ENCODE measurements at regions of chr20 and their contacts with region 1.

Region 1: GRCh38 chr20:956330-956951 is 40.3 kb upstream of the ANGPT4 start:
- DNase-seq: peak; percentile 80
- ATAC-seq: peak; percentile 84
- H3K4me3 Mint-ChIP-seq: no peak overlapping the region
- H3K27ac Mint-ChIP-seq: no peak overlapping the region
- H3K4me1 Mint-ChIP-seq: no peaks in the 10 kb centered on the region
- H3K27me3 Mint-ChIP-seq: peaks cover 20% of the 10 kb centered on the region

Region 2: GRCh38 chr20:610130-611046 is 346.1 kb before region 1 on chr20 and contains the start of gene TCF15:
- CTCF ChIA-PET with region 1: no interaction called
- POLR2A ChIA-PET with region 1: no interaction called
- DNase-seq: no peak
- ATAC-seq: peak; percentile 50
- H3K4me3 Mint-ChIP-seq: no peak within 1 kb of the TSS
- H3K27ac Mint-ChIP-seq: no peak within 1 kb of the TSS
- H3K4me1 Mint-ChIP-seq: peaks cover 4% of the 10 kb centered on the region
- H3K27me3 Mint-ChIP-seq: peaks cover 50% of the 10 kb centered on the region
- total RNA-seq, gene TCF15: not detected

Region 3: DNA sequence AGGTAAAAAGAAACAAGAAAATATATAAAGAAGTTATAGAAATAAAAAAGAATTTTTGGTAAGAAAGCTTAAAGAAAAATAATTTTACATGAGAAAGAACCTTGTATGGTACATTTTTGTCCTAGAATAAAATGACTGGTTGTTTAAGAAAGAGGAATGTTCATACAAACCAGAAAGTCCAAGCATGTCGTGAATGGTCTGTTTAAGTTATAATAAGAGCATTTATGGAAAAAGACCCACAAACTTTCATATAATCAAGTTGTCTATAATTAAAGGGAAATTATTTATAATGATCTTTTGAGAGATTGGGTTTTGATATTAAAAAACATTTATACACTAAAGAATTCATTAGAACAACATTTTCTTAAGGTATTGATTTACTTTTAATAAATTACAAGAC is 150.7 kb before region 1 on chr20:
- CTCF ChIA-PET with region 1: interaction called, 16 read pairs
- POLR2A ChIA-PET with region 1: no interaction called
- DNase-seq: no peak
- ATAC-seq: no peak
- H3K4me3 Mint-ChIP-seq: no peak overlapping the region
- H3K27ac Mint-ChIP-seq: no peak overlapping the region
- H3K4me1 Mint-ChIP-seq: no peaks in the 10 kb centered on the region
- H3K27me3 Mint-ChIP-seq: peaks cover 12% of the 10 kb centered on the region

Region 4: GRCh38 chr20:833450-834150 is 122.8 kb before region 1 on chr20 and contains the start of gene FAM110A:
- CTCF ChIA-PET with region 1: interaction called, 42 read pairs
- POLR2A ChIA-PET with region 1: no interaction called
- DNase-seq: peak; percentile 97
- ATAC-seq: peak; percentile 92
- H3K4me3 Mint-ChIP-seq: peak within 1 kb of the TSS; percentile 94
- H3K27ac Mint-ChIP-seq: peak within 1 kb of the TSS; percentile 87
- H3K4me1 Mint-ChIP-seq: peaks cover 40% of the 10 kb centered on the region
- H3K27me3 Mint-ChIP-seq: no peaks in the 10 kb centered on the region
- total RNA-seq, gene FAM110A: 35.9 to 36.3 TPM

Region 5: GRCh38 chr20:973785-974194 is 17.3 kb after region 1 on chr20:
- CTCF ChIA-PET with region 1: interaction called, 34 read pairs
- POLR2A ChIA-PET with region 1: no interaction called
- DNase-seq: peak; percentile 56
- ATAC-seq: peak; percentile 65
- H3K4me3 Mint-ChIP-seq: no peak overlapping the region
- H3K27ac Mint-ChIP-seq: no peak overlapping the region
- H3K4me1 Mint-ChIP-seq: peaks cover 2% of the 10 kb centered on the region
- H3K27me3 Mint-ChIP-seq: peaks cover 5% of the 10 kb centered on the region

Region 6: DNA sequence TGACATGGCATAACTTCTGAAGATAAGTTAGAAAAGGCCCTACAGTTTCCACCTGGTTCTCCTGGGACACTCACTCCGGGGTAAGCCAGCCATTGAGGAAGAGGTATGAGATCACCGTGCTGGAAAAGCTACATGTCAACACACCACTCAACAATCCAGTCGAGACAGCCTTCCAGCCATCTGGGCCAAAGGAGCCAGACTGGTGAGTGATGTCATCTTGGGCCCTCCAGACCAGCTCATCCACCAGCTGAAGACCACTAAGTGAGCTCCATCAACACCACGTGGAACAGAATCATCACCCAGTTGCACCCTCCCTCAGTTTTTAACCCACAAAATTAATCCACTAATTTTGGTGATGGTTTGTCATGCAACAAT is 78.0 kb after region 1 on chr20:
- CTCF ChIA-PET with region 1: no interaction called
- POLR2A ChIA-PET with region 1: no interaction called
- DNase-seq: no peak
- ATAC-seq: no peak
- H3K4me3 Mint-ChIP-seq: no peak overlapping the region
- H3K27ac Mint-ChIP-seq: no peak overlapping the region
- H3K4me1 Mint-ChIP-seq: no peaks in the 10 kb centered on the region
- H3K27me3 Mint-ChIP-seq: no peaks in the 10 kb centered on the region

Region 7: DNA sequence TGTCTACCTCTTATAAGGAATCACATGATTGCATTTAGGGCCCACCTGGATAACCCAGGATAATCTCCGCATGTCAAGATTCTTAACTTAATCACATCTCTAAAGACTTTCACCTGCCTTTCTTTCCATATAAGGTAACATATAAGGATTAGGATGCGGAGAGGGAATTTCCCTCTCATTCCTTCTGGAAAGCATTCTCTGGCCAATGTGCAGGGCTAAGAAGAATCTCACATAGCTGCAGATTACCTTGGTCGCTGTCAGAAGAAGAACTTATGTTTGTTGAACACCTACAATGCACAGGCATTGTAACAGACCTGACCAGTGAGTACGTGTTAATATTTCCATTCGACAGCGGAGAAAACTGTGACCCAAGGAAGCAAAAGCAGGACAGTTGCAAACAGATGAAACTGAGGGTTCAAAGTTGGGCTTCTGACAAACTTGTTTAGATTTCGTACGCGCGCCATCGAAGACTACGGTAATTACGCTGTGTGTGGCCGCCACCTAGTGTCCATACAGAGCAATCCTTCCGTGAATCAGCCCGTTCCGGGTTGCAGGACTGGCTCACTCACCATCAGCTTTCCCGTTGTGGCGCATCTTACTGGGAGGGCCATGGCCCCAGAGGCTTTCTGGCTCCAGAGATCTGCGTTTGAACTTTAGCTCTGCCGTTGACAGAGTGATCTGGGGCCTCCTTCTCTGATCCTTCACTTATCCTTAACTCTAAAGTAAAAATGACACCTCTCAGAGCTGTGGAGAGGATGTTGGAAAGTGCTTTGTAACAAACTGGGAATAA is 256.4 kb after region 1 on chr20:
- CTCF ChIA-PET with region 1: interaction called, 22 read pairs
- POLR2A ChIA-PET with region 1: no interaction called
- DNase-seq: peak; percentile 84
- ATAC-seq: peak; percentile 95
- H3K4me3 Mint-ChIP-seq: no peak overlapping the region
- H3K27ac Mint-ChIP-seq: no peak overlapping the region
- H3K4me1 Mint-ChIP-seq: peaks cover 34% of the 10 kb centered on the region
- H3K27me3 Mint-ChIP-seq: peaks cover 27% of the 10 kb centered on the region

Measured in activated CD8-positive, alpha-beta T cell treated with anti-CD3 and anti-CD28 coated beads, Interleukin-2, amount 10 ng/mL, durations not matched to agents 7 days and 5 days (primary cell).